IMR-90 (cell line): ENCODE measurements at regions of chr3 and their contacts with region 1.

Region 1: DNA sequence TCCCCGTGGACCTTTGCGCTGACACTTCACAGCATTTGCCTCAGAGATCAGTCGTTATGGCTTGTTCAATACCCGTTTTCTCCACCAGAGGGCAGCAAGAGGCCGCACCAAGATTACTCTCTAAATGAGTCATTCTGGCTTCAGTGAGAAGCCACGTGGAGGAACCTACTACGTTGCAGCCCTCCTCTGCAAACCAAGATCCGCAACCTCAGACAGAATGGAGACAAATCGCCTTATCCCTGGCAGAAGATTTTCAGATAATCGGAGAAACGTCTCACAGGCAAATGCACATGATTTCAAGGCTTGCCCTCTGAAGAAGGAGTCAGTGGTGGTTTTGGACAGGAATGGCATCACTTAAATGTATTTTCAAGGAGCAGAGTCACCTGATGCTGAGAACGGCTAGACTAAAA is 60.5 kb downstream of the GTPBP8 start:
- DNase-seq: peak; percentile 78
- ATAC-seq: peak; percentile 85
- H3K4me3 ChIP-seq: no peak overlapping the region
- H3K27ac ChIP-seq: no peak overlapping the region
- H3K4me1 ChIP-seq: peaks cover 5% of the 10 kb centered on the region
- H3K27me3 ChIP-seq: peaks cover 10% of the 10 kb centered on the region
- CTCF ChIP-seq: peak; percentile 87
- POLR2A ChIP-seq: no peak
- RAD21 ChIP-seq: peak; percentile 96

Region 2: GRCh38 chr3:113136071-113136470 is 84.8 kb after region 1 on chr3:
- CTCF ChIA-PET with region 1: no interaction called
- POLR2A ChIA-PET with region 1: no interaction called
- dilution Hi-C with region 1: no loop called
- in situ Hi-C with region 1: no loop called
- intact Hi-C with region 1: loop called (anchors 10 kb)
- DNase-seq: peak; percentile 27
- ATAC-seq: peak; percentile 21; the same call in 1 of the 2 replicates
- H3K4me3 ChIP-seq: no peak overlapping the region
- H3K27ac ChIP-seq: peak overlapping the region; percentile 8; the same call in 1 of the 2 replicates
- H3K4me1 ChIP-seq: peaks cover 4% of the 10 kb centered on the region; the same call in 1 of the 2 replicates
- H3K27me3 ChIP-seq: peaks cover 3% of the 10 kb centered on the region
- CTCF ChIP-seq: peak; percentile 47
- POLR2A ChIP-seq: no peak
- RAD21 ChIP-seq: peak; percentile 58

Region 3: GRCh38 chr3:113200351-113200750 is 149.0 kb after region 1 on chr3:
- CTCF ChIA-PET with region 1: no interaction called
- POLR2A ChIA-PET with region 1: no interaction called
- dilution Hi-C with region 1: no loop called
- in situ Hi-C with region 1: no loop called
- intact Hi-C with region 1: no loop called
- DNase-seq: no peak
- ATAC-seq: no peak
- H3K4me3 ChIP-seq: no peak overlapping the region
- H3K27ac ChIP-seq: no peak overlapping the region
- H3K4me1 ChIP-seq: no peaks in the 10 kb centered on the region
- H3K27me3 ChIP-seq: peaks cover 22% of the 10 kb centered on the region
- CTCF ChIP-seq: no peak
- POLR2A ChIP-seq: no peak
- RAD21 ChIP-seq: no peak

Region 4: GRCh38 chr3:113211330-113212149 is 160.2 kb after region 1 on chr3 and contains the start of gene BOC:
- CTCF ChIA-PET with region 1: no interaction called
- POLR2A ChIA-PET with region 1: no interaction called
- dilution Hi-C with region 1: no loop called
- in situ Hi-C with region 1: no loop called
- intact Hi-C with region 1: loop called (anchors 1 kb)
- DNase-seq: peak; percentile 68
- ATAC-seq: peak; percentile 75
- H3K4me3 ChIP-seq: peak within 1 kb of the TSS; percentile 76
- H3K27ac ChIP-seq: peak within 1 kb of the TSS; percentile 92
- H3K4me1 ChIP-seq: peaks cover 16% of the 10 kb centered on the region
- H3K27me3 ChIP-seq: no peaks in the 10 kb centered on the region; the same call in 1 of the 2 replicates
- CTCF ChIP-seq: 0 out of 2 replicates have a peak, but pooled peaks have one; percentile 16
- POLR2A ChIP-seq: peak; percentile 53; the same call in 1 of the 2 replicates
- RAD21 ChIP-seq: no peak
- total RNA-seq, gene BOC: 5.3 and 6.8 TPM in 2 replicates

Region 5: DNA sequence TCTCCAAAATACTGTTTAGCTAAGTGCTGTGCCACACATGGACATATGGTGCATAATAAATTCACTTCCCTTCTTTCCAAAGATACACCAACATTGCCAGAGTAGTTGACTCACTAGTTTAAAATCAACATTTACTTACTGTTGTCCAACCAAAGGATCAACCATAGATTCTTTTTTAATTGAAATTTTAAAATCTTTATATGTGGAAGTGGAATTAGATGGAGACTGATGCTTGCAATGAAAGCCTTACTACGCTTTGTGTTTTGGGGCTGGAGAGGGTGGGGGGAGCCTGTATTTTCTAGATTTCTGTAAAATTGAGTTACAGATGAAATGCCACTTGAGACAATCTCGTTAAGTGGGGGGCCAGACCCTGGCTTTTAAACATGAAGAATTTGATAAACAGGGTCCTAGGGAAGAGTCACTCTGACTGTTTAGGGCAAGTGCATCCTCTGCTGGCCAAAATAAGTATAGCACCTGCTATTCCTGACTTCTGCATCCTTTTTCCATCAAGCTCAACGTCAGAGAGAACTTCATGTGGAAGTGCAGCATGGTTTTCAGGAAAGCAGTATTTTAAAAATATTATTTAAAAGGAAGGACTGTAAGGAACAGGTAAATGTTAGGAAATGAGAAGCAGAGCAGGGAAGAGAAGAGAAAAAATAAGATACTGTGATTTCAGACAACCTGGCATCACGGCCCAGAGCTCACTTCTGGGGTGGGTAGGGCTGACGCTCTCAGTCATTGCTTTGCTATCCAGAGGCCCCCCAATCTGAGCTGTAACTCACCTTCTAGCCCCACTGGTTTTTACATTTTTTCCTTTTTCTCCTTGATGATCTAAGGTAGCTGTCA is 236.7 kb after region 1 on chr3:
- CTCF ChIA-PET with region 1: interaction called, 15 read pairs
- POLR2A ChIA-PET with region 1: no interaction called
- dilution Hi-C with region 1: no loop called
- in situ Hi-C with region 1: loop called (anchors 5 kb)
- intact Hi-C with region 1: loop called (anchors 1 kb)
- DNase-seq: peak; percentile 72
- ATAC-seq: peak; percentile 64
- H3K4me3 ChIP-seq: no peak overlapping the region
- H3K27ac ChIP-seq: peak overlapping the region; percentile 59
- H3K4me1 ChIP-seq: peaks cover 14% of the 10 kb centered on the region
- H3K27me3 ChIP-seq: peaks cover 14% of the 10 kb centered on the region
- CTCF ChIP-seq: peak; percentile 99
- POLR2A ChIP-seq: peak; percentile 59; the same call in 1 of the 2 replicates
- RAD21 ChIP-seq: peak; percentile 97

Region 6: GRCh38 chr3:113436809-113437208 is 385.5 kb after region 1 on chr3:
- CTCF ChIA-PET with region 1: no interaction called
- POLR2A ChIA-PET with region 1: no interaction called
- dilution Hi-C with region 1: no loop called
- in situ Hi-C with region 1: no loop called
- intact Hi-C with region 1: no loop called
- DNase-seq: peak; percentile 86
- ATAC-seq: peak; percentile 52
- H3K4me3 ChIP-seq: no peak overlapping the region
- H3K27ac ChIP-seq: no peak overlapping the region
- H3K4me1 ChIP-seq: peaks cover 2% of the 10 kb centered on the region; the same call in 1 of the 2 replicates
- H3K27me3 ChIP-seq: no peaks in the 10 kb centered on the region
- CTCF ChIP-seq: no peak
- POLR2A ChIP-seq: no peak
- RAD21 ChIP-seq: no peak

Region 7: DNA sequence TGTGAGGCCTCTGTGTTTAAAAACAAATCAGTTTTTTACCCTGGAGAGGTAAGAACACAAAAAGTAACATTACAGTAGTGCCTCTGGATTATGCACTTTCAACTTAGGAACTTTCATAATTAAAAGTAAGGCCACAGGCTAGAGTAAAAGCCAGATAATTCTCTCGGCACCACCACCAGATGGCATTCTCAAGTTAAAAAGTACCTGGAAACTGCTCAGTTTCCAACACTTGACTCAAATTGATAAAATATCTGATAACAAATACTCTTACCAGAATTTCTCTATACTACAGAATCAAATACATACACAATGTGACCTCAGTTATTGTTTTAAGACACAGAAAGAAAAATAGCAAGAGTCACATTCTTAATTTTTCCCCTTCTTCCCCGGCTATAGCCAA is 443.7 kb after region 1 on chr3:
- CTCF ChIA-PET with region 1: no interaction called
- POLR2A ChIA-PET with region 1: no interaction called
- dilution Hi-C with region 1: no loop called
- in situ Hi-C with region 1: no loop called
- intact Hi-C with region 1: loop called (anchors 10 kb)
- DNase-seq: peak; percentile 44
- ATAC-seq: no peak
- H3K4me3 ChIP-seq: no peak overlapping the region
- H3K27ac ChIP-seq: no peak overlapping the region
- H3K4me1 ChIP-seq: peaks cover 7% of the 10 kb centered on the region
- H3K27me3 ChIP-seq: no peaks in the 10 kb centered on the region
- CTCF ChIP-seq: peak; percentile 44
- POLR2A ChIP-seq: no peak
- RAD21 ChIP-seq: peak; percentile 31; the same call in 1 of the 2 replicates

Region 8: DNA sequence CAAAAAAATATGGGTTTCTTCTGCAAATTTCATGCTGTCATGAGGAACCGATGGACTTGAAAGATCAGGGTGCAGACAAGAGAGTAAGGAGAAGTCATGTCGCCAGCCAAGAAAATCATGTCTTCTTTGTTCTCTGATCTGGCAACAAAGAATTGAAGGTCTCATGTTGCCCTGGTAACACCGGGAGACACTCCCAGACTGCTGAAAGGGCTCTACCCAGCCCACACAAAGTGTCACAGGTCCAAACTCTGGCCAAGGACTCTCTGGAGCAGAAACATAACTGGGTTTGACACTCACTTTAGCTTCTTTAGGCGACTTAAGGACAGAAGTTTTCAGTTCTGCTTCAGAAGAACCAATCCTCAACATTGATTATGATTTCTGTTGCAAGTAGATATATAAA is 523.9 kb after region 1 on chr3:
- CTCF ChIA-PET with region 1: no interaction called
- POLR2A ChIA-PET with region 1: no interaction called
- dilution Hi-C with region 1: no loop called
- in situ Hi-C with region 1: no loop called
- intact Hi-C with region 1: loop called (anchors 10 kb)
- DNase-seq: no peak
- ATAC-seq: no peak
- H3K4me3 ChIP-seq: no peak overlapping the region
- H3K27ac ChIP-seq: no peak overlapping the region
- H3K4me1 ChIP-seq: no peaks in the 10 kb centered on the region
- H3K27me3 ChIP-seq: peaks cover 28% of the 10 kb centered on the region
- CTCF ChIP-seq: no peak
- POLR2A ChIP-seq: no peak
- RAD21 ChIP-seq: no peak

Region 9: DNA sequence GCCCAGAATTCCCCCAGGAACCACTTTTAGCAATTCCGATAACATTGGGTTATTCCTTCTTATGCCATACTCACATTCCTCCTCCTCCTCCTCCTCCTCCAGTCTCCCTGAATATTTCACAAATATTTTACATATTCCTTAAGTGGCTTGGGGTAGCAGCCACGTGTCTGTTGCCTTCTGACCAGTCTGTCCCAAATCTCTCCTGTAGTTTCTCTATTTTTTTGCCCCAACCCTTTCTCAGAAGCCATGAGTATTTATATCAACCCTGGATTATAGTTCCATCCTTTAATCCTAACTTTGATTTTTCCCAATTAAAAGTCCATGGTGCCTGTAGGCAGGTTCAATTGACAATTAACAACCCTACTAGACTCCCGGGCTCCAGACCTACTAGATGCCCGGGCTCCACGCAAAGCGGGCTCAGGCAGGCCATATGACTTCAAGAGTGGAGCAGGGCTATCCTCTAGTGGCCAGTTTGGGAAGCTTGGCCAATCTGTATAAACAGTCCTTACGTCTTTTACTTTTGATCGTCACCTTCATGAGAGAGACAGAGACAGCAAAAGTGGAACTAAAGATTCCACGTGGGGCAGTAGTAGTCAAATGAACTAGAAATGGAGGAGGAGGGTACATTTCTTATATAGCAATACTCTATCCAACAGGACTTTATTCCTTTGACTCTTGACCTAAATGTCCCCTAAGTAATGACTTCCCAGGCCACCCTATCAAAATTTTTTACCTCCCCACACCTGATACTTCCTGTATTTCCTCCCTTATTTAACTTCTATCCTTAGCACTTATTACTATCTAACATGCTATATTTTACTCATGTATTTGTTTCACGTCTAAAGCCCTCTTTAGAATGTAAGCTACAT is 575.4 kb after region 1 on chr3:
- CTCF ChIA-PET with region 1: no interaction called
- POLR2A ChIA-PET with region 1: no interaction called
- dilution Hi-C with region 1: no loop called
- in situ Hi-C with region 1: loop called (anchors 10 kb)
- intact Hi-C with region 1: loop called (anchors 1 kb)
- DNase-seq: peak; percentile 58
- ATAC-seq: peak; percentile 93
- H3K4me3 ChIP-seq: no peak overlapping the region
- H3K27ac ChIP-seq: no peak overlapping the region
- H3K4me1 ChIP-seq: peaks cover 2% of the 10 kb centered on the region; the same call in 1 of the 2 replicates
- H3K27me3 ChIP-seq: peaks cover 13% of the 10 kb centered on the region
- CTCF ChIP-seq: peak; percentile 83
- POLR2A ChIP-seq: no peak
- RAD21 ChIP-seq: peak; percentile 82